GM10248 (cell line): ENCODE measurements at regions of chr3 and their contacts with region 1.

Region 1: GRCh38 chr3:128226795-128227395 is 73.6 kb downstream of the EEFSEC start:
- DNase-seq: peak; percentile 68
- CTCF ChIP-seq: peak; percentile 51

Region 2: DNA sequence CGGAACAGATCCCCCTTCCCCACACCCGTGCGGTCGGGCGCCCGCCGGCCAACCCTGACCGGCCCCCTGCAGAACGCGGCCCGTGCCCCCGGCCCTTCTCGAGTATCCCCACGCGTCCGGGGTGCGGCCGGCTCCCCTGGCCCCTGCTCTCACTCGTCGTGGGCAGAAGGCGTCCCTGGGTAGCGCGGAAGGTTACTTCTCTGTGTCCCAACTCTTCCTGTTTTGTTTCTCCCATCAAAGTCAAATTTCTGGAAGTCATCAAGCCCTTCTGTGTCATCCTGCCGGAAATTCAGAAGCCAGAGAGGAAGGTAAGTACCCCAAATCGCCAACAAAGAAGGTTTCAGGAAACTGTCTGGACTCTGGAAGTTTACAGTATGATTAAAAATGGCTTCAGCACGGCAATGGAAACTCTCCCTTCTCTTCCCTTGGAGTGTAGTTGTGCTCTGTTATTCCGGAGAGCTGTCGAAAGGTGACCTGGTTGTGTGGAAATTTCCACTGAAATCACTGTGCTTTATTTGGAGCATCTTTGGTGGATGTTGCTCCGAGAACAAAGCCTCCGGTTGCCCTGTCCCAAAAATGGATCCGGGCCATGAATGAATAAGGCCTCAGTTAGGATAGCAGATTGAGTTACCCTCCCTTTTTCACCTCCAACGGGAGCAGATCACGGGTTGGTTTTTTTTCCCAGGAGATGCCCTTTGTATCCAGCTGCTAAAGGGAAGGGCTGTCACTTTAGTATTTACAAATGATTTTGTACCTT is 174.1 kb before region 1 on chr3:
- CTCF ChIA-PET with region 1: no interaction called
- POLR2A ChIA-PET with region 1: no interaction called
- DNase-seq: no peak
- CTCF ChIP-seq: no peak

Region 3: DNA sequence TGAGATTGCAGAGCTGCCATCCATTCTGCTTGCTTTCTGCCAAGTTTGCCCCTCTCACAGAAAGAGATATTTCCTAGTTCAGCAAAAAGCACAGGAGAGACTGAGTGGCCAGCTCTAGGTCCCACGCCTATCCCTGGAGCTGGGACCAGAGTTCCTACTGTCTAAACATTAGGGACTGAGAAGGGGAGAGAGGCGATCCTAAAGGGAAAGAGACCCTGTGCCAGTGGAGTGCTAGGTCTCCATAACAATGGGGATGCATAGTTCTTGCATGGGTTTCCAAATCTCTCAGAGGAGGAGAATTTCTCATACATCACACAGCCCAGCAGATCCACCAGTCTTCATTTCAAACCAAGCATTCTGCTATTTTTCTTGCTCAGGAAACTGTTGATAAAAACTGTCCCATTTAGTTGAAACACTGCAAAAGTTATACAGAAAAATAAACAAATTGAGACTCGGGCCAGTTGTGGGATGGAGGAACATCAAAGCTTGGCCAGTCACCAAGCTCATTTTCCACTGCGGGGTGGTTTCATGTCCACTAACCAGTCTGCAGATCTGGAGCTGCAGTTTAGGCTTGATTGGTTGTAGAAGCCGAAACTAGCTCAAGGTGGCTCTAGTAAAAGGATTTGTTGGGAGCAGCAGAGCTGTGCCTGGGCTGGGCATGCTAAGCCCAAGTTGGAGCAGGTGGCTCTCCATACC is 10.9 kb before region 1 on chr3:
- CTCF ChIA-PET with region 1: interaction called, 20 read pairs
- POLR2A ChIA-PET with region 1: no interaction called
- DNase-seq: no peak
- CTCF ChIP-seq: no peak